Mammary epithelial cell (primary cell): ENCODE measurements at regions of chr6 and their contacts with region 1.

Region 1: DNA sequence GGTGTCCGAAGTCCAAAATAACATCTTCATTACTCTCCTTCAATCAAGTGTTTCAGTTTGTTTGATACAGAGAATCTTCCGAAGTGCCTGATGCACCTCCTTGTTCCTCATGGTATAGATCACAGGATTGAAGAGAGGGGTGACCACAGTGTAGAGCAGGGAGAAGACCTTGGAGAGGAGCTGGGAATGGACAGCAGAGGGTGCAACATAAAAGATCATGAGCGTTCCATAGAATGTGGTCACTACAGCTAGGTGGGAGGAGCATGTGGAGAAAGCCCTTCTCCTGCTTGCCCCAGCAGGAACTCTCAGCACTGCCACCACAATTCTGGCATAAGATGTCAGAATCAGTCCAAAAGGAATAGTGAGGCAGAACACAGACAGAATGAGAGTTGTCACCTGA is 11.9 kb downstream of the OR12D1 start:
- DNase-seq: no peak
- H3K4me3 ChIP-seq: no peak overlapping the region
- H3K27ac ChIP-seq: no peak overlapping the region
- H3K4me1 ChIP-seq: no peaks in the 10 kb centered on the region
- H3K27me3 ChIP-seq: peaks cover 3% of the 10 kb centered on the region
- CTCF ChIP-seq: no peak

Region 2: DNA sequence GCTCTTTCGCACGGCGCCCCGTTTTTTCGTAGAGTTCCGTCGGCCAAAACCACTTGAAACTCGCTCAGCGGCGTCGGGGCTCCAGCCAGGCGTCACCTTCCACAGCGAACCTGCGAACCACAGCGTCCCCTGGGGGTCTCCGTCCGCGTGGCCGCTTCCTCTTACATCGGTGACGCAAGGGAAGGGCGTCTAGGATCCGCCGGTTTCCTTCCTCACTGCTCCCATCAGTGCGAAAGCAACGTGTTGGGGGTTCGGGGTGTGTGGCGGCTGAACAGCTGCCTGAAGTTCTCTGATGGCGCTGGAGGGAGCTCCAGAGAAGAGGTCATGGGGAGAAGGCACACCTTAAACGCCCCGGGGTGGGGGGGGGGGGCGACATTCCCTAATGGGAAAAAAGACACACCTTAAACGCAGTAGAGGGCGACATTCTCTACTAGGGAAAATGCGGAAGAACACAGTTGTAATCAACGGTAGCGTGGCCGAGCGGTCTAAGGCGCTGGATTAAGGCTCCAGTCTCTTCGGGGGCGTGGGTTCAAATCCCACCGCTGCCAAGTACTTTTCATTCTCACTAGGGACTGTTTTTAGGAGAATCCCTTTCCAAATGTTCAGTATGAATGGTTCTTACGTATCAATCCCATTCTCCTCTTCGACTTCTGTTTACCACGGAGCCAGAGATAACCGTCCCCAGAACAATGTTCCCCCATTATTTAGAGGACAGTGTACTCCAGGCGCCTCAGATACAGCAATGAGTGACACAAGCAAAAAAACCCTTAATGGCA is 437.9 kb before region 1 on chr6:
- CTCF ChIA-PET with region 1: no interaction called
- dilution Hi-C with region 1: no loop called
- in situ Hi-C with region 1: no loop called
- intact Hi-C with region 1: no loop called
- DNase-seq: peak; percentile 48
- H3K4me3 ChIP-seq: no peak overlapping the region
- H3K27ac ChIP-seq: no peak overlapping the region
- H3K4me1 ChIP-seq: peaks cover 4% of the 10 kb centered on the region
- H3K27me3 ChIP-seq: no peaks in the 10 kb centered on the region
- CTCF ChIP-seq: no peak

Region 3: DNA sequence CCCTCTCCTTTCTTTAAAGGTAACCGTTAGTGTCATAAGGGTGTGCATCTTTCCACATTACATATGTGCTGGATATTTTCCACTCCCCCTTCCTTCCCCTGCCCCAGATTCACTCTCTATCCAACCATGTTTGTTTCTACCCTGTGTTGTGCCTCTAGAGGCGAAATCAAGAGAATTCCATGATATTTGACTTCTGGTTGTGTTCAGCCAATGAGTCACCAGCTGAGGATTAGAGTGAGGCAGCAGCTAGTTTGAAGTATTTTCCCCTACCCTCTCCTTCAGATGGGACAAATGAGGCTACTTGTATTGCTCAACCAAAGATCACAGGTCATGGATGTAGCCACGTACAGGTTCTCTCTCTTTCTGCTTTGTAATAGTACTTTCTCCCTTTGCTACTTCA is 280.5 kb before region 1 on chr6:
- CTCF ChIA-PET with region 1: no interaction called
- dilution Hi-C with region 1: no loop called
- in situ Hi-C with region 1: no loop called
- intact Hi-C with region 1: no loop called
- DNase-seq: no peak
- H3K4me3 ChIP-seq: no peak overlapping the region
- H3K27ac ChIP-seq: no peak overlapping the region
- H3K4me1 ChIP-seq: no peaks in the 10 kb centered on the region
- H3K27me3 ChIP-seq: no peaks in the 10 kb centered on the region
- CTCF ChIP-seq: no peak

Region 4: DNA sequence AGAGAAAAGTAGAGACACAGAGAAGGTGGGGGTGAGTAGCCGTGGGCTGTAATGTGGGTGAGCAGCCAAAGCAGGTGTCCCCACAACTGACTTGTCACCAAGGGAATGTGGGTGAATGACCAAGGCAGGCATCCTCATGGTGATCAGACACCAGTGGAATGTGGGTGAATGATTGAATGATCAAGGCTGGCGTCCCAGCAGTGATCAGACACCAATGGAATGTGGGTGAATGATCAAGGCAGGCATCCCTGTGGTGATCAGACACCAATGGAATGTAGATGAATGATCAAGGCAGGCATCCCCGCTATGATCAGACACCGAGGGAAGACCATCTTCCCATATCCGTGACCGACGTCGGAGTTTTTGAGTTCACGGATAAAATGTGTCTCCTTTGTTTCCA is 174.9 kb before region 1 on chr6:
- CTCF ChIA-PET with region 1: no interaction called
- dilution Hi-C with region 1: no loop called
- in situ Hi-C with region 1: no loop called
- intact Hi-C with region 1: no loop called
- DNase-seq: no peak
- H3K4me3 ChIP-seq: no peak overlapping the region
- H3K27ac ChIP-seq: no peak overlapping the region
- H3K4me1 ChIP-seq: no peaks in the 10 kb centered on the region
- H3K27me3 ChIP-seq: no peaks in the 10 kb centered on the region
- CTCF ChIP-seq: no peak

Region 5: DNA sequence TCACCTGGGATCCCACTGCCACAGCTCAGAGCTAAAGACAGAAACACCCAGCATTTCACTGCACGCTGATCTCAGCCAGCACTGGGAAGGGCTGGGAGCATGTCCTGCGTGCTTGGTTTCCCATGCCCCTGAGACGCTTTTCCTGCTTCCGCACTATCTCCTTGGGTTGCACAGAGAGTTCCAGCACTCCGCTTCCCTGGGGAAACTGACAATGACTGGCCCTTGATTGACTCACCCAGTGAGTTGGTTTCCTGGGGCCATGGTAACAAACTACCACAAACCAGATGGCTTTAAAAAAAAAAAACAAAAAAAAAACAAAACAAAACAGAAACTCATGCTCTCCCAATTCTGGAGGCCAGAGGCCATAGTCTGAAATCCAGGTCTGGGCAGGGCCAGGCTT is 75.9 kb after region 1 on chr6:
- CTCF ChIA-PET with region 1: no interaction called
- dilution Hi-C with region 1: loop called (anchors 5 kb)
- in situ Hi-C with region 1: no loop called
- intact Hi-C with region 1: no loop called
- DNase-seq: peak; percentile 89
- H3K4me3 ChIP-seq: no peak overlapping the region
- H3K27ac ChIP-seq: no peak overlapping the region
- H3K4me1 ChIP-seq: no peaks in the 10 kb centered on the region
- H3K27me3 ChIP-seq: peaks cover 4% of the 10 kb centered on the region
- CTCF ChIP-seq: no peak

Region 6: GRCh38 chr6:29510202-29510601 is 83.5 kb after region 1 on chr6:
- CTCF ChIA-PET with region 1: interaction called, 4 read pairs
- dilution Hi-C with region 1: no loop called
- in situ Hi-C with region 1: no loop called
- intact Hi-C with region 1: loop called (anchors 2 kb)
- DNase-seq: no peak
- H3K4me3 ChIP-seq: no peak overlapping the region
- H3K27ac ChIP-seq: no peak overlapping the region
- H3K4me1 ChIP-seq: no peaks in the 10 kb centered on the region
- H3K27me3 ChIP-seq: peaks cover 9% of the 10 kb centered on the region
- CTCF ChIP-seq: no peak